Endothelial cell of umbilical vein (primary cell): ENCODE measurements at regions of chr6 and their contacts with region 1.

Region 1: DNA sequence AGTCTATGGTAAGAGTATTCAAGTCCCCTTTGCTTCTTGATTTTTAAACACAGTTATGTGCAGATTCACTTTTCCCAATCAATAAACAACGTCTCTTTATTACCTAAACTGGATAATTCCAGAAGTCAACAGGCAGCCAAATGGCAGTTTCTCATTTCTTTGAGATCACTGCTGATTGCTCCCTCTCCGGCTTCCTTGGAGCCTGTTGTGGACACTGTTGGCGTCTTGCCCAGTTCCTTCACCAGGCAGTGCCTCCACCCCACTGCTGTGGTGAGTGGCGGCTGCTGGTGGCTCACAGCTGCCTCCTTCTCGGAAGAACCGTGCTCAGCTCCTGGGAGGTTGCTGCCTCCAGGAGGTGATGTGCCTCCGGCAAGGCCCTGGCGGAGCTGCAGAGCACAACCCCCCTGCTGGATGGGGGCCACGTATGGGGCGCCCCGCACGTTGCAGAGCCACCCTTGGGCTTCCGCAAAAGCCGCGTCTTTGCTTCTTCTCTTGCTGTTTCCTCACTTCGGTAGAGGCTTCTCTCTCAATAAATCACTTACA is 105.1 kb upstream of the CNKSR3 start:
- DNase-seq: peak; percentile 27
- H3K4me3 ChIP-seq: no peak overlapping the region
- H3K27ac ChIP-seq: no peak overlapping the region
- H3K4me1 ChIP-seq: peaks cover 22% of the 10 kb centered on the region
- H3K27me3 ChIP-seq: no peaks in the 10 kb centered on the region
- CTCF ChIP-seq: no peak
- POLR2A ChIP-seq: no peak

Region 2: DNA sequence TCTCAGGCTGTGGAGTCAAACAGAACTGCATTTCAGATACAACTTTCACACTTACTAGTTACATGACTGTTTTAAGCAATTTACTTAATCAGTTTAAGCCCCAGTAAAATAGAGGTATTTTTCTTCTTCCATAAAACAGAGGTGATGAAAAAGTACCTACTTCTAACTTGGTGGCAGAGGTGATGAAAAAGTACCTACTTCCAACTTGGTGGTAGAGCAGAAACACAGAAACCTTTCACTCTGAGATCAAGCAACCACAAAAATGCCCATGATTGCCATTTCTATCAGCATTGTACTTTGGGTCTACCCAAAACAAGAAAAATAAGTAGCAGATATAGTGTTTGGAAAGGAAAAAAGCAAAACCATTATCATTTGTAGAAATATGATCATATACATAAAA is 427.8 kb before region 1 on chr6:
- CTCF ChIA-PET with region 1: no interaction called
- POLR2A ChIA-PET with region 1: no interaction called
- dilution Hi-C with region 1: no loop called
- intact Hi-C with region 1: no loop called
- DNase-seq: no peak
- H3K4me3 ChIP-seq: no peak overlapping the region
- H3K27ac ChIP-seq: no peak overlapping the region
- H3K4me1 ChIP-seq: no peaks in the 10 kb centered on the region
- H3K27me3 ChIP-seq: no peaks in the 10 kb centered on the region
- CTCF ChIP-seq: no peak
- POLR2A ChIP-seq: no peak

Region 3: GRCh38 chr6:154548130-154548830 is 67.3 kb before region 1 on chr6:
- CTCF ChIA-PET with region 1: no interaction called
- POLR2A ChIA-PET with region 1: no interaction called
- dilution Hi-C with region 1: no loop called
- intact Hi-C with region 1: no loop called
- DNase-seq: peak; percentile 92
- H3K4me3 ChIP-seq: no peak overlapping the region
- H3K27ac ChIP-seq: no peak overlapping the region
- H3K4me1 ChIP-seq: peaks cover 8% of the 10 kb centered on the region
- H3K27me3 ChIP-seq: no peaks in the 10 kb centered on the region
- CTCF ChIP-seq: no peak
- POLR2A ChIP-seq: no peak

Region 4: GRCh38 chr6:154638369-154638768 is 22.8 kb after region 1 on chr6:
- CTCF ChIA-PET with region 1: no interaction called
- POLR2A ChIA-PET with region 1: no interaction called
- dilution Hi-C with region 1: no loop called
- intact Hi-C with region 1: no loop called
- DNase-seq: peak; percentile 93
- H3K4me3 ChIP-seq: peak overlapping the region in 1 of 3 experiments; percentile 8
- H3K27ac ChIP-seq: peak overlapping the region; percentile 37
- H3K4me1 ChIP-seq: peaks cover 7% of the 10 kb centered on the region
- H3K27me3 ChIP-seq: no peaks in the 10 kb centered on the region
- CTCF ChIP-seq: no peak
- POLR2A ChIP-seq: no peak

Region 5: GRCh38 chr6:154653853-154654252 is 38.3 kb after region 1 on chr6:
- CTCF ChIA-PET with region 1: interaction called, 5 read pairs
- POLR2A ChIA-PET with region 1: interaction called, 4 read pairs
- dilution Hi-C with region 1: no loop called
- intact Hi-C with region 1: loop called (anchors 1 kb)
- DNase-seq: peak; percentile 95
- H3K4me3 ChIP-seq: no peak overlapping the region
- H3K27ac ChIP-seq: peak overlapping the region; percentile 92
- H3K4me1 ChIP-seq: peaks cover 29% of the 10 kb centered on the region
- H3K27me3 ChIP-seq: no peaks in the 10 kb centered on the region
- CTCF ChIP-seq: no peak
- POLR2A ChIP-seq: no peak

Region 6: GRCh38 chr6:154683756-154684523 is 68.4 kb after region 1 on chr6:
- CTCF ChIA-PET with region 1: no interaction called
- POLR2A ChIA-PET with region 1: no interaction called
- dilution Hi-C with region 1: no loop called
- intact Hi-C with region 1: no loop called
- DNase-seq: peak; percentile 78
- H3K4me3 ChIP-seq: peak overlapping the region in 1 of 3 experiments; percentile 10
- H3K27ac ChIP-seq: peak overlapping the region; percentile 61
- H3K4me1 ChIP-seq: peaks cover 13% of the 10 kb centered on the region
- H3K27me3 ChIP-seq: no peaks in the 10 kb centered on the region
- CTCF ChIP-seq: no peak
- POLR2A ChIP-seq: no peak